Endothelial cell of umbilical vein (primary cell): ENCODE measurements at regions of chr10 and their contacts with region 1.

Region 1: GRCh38 chr10:16995867-16996529 is 133.6 kb downstream of the CUBN start:
- DNase-seq: peak; percentile 96
- H3K4me3 ChIP-seq: peak overlapping the region in 1 of 3 experiments; percentile 39
- H3K27ac ChIP-seq: peak overlapping the region; percentile 98
- H3K4me1 ChIP-seq: peaks cover 57% of the 10 kb centered on the region
- H3K27me3 ChIP-seq: no peaks in the 10 kb centered on the region
- CTCF ChIP-seq: no peak
- POLR2A ChIP-seq: peak; percentile 76

Region 2: DNA sequence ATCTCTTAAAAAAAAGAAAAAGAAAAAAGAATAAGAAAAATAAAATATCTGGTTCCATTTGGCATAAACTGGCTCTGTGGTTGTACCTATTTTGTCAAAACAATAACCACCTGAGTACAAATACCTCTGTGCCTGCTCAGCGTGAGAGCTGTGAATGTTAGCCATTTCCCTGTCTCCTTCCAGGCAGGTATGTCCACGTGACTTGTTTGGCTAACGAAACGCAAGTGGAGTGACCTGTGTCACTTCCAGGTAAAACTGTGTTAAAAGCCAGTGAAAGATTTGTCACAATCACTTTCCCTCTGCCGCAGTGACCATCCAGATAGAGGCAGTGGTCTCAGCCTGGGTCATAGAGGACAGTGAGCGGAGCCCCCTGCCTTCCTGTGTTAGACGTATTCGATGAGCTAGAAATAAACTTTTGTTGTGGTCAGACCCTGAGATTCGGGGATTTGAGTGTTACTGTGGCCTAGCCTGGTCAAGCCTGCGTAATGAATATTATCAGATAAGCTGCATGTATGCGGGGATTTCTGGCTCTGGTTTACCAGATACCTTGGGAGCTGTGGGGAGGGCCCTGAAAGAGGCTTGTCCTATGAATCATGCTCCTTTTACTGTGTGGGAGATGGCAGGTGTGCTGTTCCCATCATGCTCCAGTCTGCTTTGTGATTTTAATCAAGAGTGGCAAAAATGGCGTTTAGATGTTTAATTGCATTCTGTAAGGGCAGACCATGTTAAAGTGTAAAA is 555.4 kb before region 1 on chr10:
- CTCF ChIA-PET with region 1: no interaction called
- POLR2A ChIA-PET with region 1: no interaction called
- dilution Hi-C with region 1: no loop called
- intact Hi-C with region 1: no loop called
- DNase-seq: no peak
- H3K4me3 ChIP-seq: no peak overlapping the region
- H3K27ac ChIP-seq: no peak overlapping the region
- H3K4me1 ChIP-seq: peaks cover 3% of the 10 kb centered on the region
- H3K27me3 ChIP-seq: no peaks in the 10 kb centered on the region
- CTCF ChIP-seq: no peak
- POLR2A ChIP-seq: no peak

Region 3: DNA sequence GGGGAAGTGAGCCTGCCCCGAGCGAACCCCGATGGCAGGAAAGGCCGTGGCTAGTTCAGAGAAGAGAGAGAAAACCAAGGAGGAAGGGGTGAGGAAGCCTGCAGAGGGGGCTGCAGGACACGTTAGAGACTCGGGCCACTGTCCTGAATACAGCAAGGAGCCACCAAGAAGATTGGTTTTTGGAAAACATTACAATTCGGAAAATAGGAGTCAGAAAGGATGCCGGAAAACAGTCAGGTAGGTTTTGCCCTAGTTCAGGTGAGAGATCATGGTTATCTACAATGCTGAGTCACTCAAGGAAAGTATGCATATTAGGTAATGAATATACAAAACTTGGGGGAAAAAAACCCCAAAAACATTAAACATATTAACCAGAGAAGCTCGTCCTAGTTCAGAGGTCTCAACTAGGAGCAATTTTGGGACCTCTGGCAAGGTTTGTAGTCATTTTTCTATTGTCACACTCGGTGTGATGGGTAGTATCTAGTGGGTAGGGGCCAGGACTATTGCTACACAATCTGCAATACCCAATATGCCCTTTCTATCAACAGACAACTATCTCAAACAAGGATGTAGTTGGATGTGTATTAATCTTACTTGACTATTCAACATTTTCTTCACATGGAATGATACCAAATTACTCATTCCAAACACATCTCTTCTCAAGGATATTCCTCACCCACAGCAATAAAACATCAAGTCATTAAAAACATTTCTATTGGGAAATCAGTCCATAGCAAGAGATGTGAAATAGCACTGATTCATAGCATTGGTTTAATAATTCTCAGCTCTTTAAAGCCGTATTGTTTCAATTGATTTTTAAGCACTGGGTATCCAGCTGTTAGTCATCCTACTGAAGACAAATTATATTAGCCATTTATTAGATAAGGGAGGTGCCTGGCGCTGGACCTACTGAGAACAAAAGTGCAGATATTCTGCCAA is 104.4 kb before region 1 on chr10:
- CTCF ChIA-PET with region 1: interaction called, 8 read pairs
- POLR2A ChIA-PET with region 1: interaction called, 3 read pairs
- dilution Hi-C with region 1: no loop called
- intact Hi-C with region 1: loop called (anchors 2 kb)
- DNase-seq: peak; percentile 70
- H3K4me3 ChIP-seq: no peak overlapping the region
- H3K27ac ChIP-seq: peak overlapping the region; percentile 5
- H3K4me1 ChIP-seq: peaks cover 8% of the 10 kb centered on the region
- H3K27me3 ChIP-seq: no peaks in the 10 kb centered on the region
- CTCF ChIP-seq: peak; percentile 45 to 58
- POLR2A ChIP-seq: peak; percentile 94

Region 4: GRCh38 chr10:16950656-16951601 is 45.1 kb before region 1 on chr10:
- CTCF ChIA-PET with region 1: no interaction called
- POLR2A ChIA-PET with region 1: no interaction called
- dilution Hi-C with region 1: no loop called
- intact Hi-C with region 1: loop called (anchors 2 kb)
- DNase-seq: peak; percentile 89
- H3K4me3 ChIP-seq: no peak overlapping the region
- H3K27ac ChIP-seq: peak overlapping the region; percentile 66
- H3K4me1 ChIP-seq: peaks cover 40% of the 10 kb centered on the region
- H3K27me3 ChIP-seq: no peaks in the 10 kb centered on the region
- CTCF ChIP-seq: no peak
- POLR2A ChIP-seq: no peak

Region 5: GRCh38 chr10:17023386-17024298 is 27.6 kb after region 1 on chr10:
- CTCF ChIA-PET with region 1: interaction called, 5 read pairs
- POLR2A ChIA-PET with region 1: interaction called, 5 read pairs
- dilution Hi-C with region 1: no loop called
- intact Hi-C with region 1: loop called (anchors 1 kb)
- DNase-seq: peak; percentile 96
- H3K4me3 ChIP-seq: peak overlapping the region in 1 of 3 experiments; percentile 35
- H3K27ac ChIP-seq: peak overlapping the region; percentile 72
- H3K4me1 ChIP-seq: peaks cover 51% of the 10 kb centered on the region
- H3K27me3 ChIP-seq: no peaks in the 10 kb centered on the region
- CTCF ChIP-seq: no peak
- POLR2A ChIP-seq: peak; percentile 22

Region 6: DNA sequence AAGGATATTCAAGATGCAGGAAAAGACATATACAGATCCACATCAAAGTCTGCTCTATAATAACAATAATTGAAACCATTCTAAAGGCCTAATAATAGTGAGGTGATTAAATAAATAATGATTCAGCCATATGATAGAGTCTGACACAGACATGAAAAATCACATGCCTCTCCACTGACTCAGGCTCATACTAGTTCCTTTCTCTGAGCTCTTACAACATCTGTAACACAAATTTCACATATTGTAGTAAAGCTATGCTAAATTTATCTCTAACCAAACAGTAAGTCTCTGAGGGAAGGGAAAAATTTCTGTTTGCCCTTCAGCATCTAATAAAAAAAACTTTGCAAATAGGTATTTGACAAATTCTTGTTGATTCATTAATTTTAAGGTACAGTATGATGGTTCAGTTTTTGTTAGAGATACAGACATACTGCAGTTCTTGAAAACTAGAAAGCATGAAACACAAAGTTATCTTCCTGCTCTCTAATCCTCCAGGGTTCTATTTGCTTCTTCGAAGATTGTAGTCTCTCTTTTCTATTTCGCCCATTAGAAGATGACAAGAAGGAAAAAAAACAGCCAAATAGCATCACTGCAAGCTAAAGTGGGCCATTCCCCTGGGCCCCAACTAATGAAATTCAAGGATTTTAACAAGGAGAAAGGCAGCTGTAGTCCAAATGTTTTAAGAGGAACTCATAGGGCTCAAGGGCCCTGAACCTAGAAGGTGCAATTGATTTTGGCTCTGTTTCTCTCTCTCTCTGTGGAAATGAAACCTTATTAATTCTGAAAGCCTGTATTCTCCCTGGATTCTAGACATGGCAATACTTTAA is 79.7 kb after region 1 on chr10:
- CTCF ChIA-PET with region 1: no interaction called
- POLR2A ChIA-PET with region 1: no interaction called
- dilution Hi-C with region 1: no loop called
- intact Hi-C with region 1: loop called (anchors 2 kb)
- DNase-seq: peak; percentile 89
- H3K4me3 ChIP-seq: no peak overlapping the region
- H3K27ac ChIP-seq: peak overlapping the region; percentile 95
- H3K4me1 ChIP-seq: peaks cover 49% of the 10 kb centered on the region
- H3K27me3 ChIP-seq: no peaks in the 10 kb centered on the region
- CTCF ChIP-seq: no peak
- POLR2A ChIP-seq: no peak

Region 7: GRCh38 chr10:17228091-17228940 is 232.3 kb after region 1 on chr10 and contains the start of gene VIM:
- CTCF ChIA-PET with region 1: interaction called, 14 read pairs
- POLR2A ChIA-PET with region 1: interaction called, 25 read pairs
- dilution Hi-C with region 1: no loop called
- intact Hi-C with region 1: loop called (anchors 1 kb)
- DNase-seq: peak; percentile 97
- H3K4me3 ChIP-seq: peak within 1 kb of the TSS; percentile 66 to 87 (median 83)
- H3K27ac ChIP-seq: peak within 1 kb of the TSS; percentile 99
- H3K4me1 ChIP-seq: peaks cover 24% of the 10 kb centered on the region
- H3K27me3 ChIP-seq: no peaks in the 10 kb centered on the region
- CTCF ChIP-seq: peak in 1 of 2 donors; percentile 16
- POLR2A ChIP-seq: peak; percentile 92
- total RNA-seq, gene VIM: 5,754 and 5,781 TPM in 2 replicates